Calu3 (cell line): ENCODE measurements at regions of chr4 and their contacts with region 1.

Region 1: GRCh38 chr4:118772081-118772766 is 63.7 kb downstream of the SEC24D start:
- DNase-seq: no peak
- H3K4me3 Mint-ChIP-seq: no peak overlapping the region
- H3K27ac Mint-ChIP-seq: no peak overlapping the region
- H3K4me1 Mint-ChIP-seq: peaks cover 13% of the 10 kb centered on the region
- H3K27me3 Mint-ChIP-seq: no peaks in the 10 kb centered on the region
- CTCF ChIP-seq: no peak

Region 2: GRCh38 chr4:118076958-118077766 is 695.1 kb before region 1 on chr4:
- CTCF ChIA-PET with region 1: no interaction called
- intact Hi-C with region 1: no loop called
- DNase-seq: no peak
- H3K4me3 Mint-ChIP-seq: no peak overlapping the region
- H3K27ac Mint-ChIP-seq: no peak overlapping the region
- H3K4me1 Mint-ChIP-seq: no peaks in the 10 kb centered on the region
- H3K27me3 Mint-ChIP-seq: no peaks in the 10 kb centered on the region
- CTCF ChIP-seq: peak; percentile 12

Region 3: DNA sequence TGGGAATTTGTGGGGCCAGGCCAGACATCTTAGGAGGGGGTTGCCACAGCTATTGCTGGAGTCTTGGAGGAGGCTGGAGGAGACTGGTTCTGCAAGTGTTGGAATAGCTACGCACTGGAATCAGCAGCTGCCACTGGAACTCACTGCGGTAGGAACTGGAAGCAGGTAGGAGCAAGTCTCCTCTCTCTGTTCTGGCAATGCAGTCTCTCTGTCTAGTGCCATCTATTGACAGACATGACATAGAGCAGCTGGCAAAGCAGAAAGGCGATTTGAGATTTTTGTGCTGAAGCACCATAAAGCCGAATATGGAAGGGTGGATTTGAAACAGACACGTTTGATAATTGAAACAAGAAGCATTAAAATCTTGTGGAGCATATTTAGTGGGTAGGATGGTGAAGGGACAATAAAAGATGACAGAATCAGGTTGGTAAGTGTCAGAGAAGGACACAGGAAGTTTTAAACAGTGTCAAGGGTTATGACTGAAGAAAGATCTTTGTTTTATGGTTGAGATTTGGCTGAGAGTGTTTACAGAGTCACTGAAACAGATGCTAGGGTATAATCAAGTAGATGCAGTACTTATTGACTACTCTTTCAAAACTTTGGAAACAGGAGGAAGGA is 93.0 kb after region 1 on chr4:
- CTCF ChIA-PET with region 1: interaction called, 3 read pairs
- intact Hi-C with region 1: loop called (anchors 1 kb)
- DNase-seq: peak; percentile 27
- H3K4me3 Mint-ChIP-seq: no peak overlapping the region
- H3K27ac Mint-ChIP-seq: no peak overlapping the region
- H3K4me1 Mint-ChIP-seq: no peaks in the 10 kb centered on the region
- H3K27me3 Mint-ChIP-seq: no peaks in the 10 kb centered on the region
- CTCF ChIP-seq: peak; percentile 49

Region 4: GRCh38 chr4:118888666-118889311 is 116.6 kb after region 1 on chr4 and contains the start of gene SYNPO2:
- CTCF ChIA-PET with region 1: interaction called, 4 read pairs
- intact Hi-C with region 1: loop called (anchors 1 kb)
- DNase-seq: peak; percentile 31
- H3K4me3 Mint-ChIP-seq: peak within 1 kb of the TSS; percentile 76
- H3K27ac Mint-ChIP-seq: no peak within 1 kb of the TSS
- H3K4me1 Mint-ChIP-seq: peaks cover 13% of the 10 kb centered on the region
- H3K27me3 Mint-ChIP-seq: no peaks in the 10 kb centered on the region
- CTCF ChIP-seq: no peak
- total RNA-seq, gene SYNPO2: 0.17 and 0.39 TPM in 2 replicates